ENCODE measurements at regions of chr1 and their contacts with region 1.

Region 1: GRCh38 chr1:20661207-20662109 is at the start of gene DDOST:
- DNase-seq: peak; percentile 98
- H3K4me3 Mint-ChIP-seq: peak within 1 kb of the TSS; percentile 100
- H3K27ac Mint-ChIP-seq: peak within 1 kb of the TSS; percentile 98
- H3K4me1 Mint-ChIP-seq: peaks cover 46% of the 10 kb centered on the region
- H3K27me3 Mint-ChIP-seq: no peaks in the 10 kb centered on the region
- total RNA-seq, gene DDOST: 165 to 180 TPM

Region 2: GRCh38 chr1:20732588-20733360 is 71.3 kb after region 1 on chr1 and contains the start of gene SH2D5:
- CTCF ChIA-PET with region 1: no interaction called
- POLR2A ChIA-PET with region 1: no interaction called
- intact Hi-C with region 1: loop called (anchors 5 kb)
- DNase-seq: peak; percentile 85
- H3K4me3 Mint-ChIP-seq: peak within 1 kb of the TSS; percentile 74
- H3K27ac Mint-ChIP-seq: no peak within 1 kb of the TSS
- H3K4me1 Mint-ChIP-seq: peaks cover 21% of the 10 kb centered on the region
- H3K27me3 Mint-ChIP-seq: peaks cover 19% of the 10 kb centered on the region
- total RNA-seq, gene SH2D5: 0.07 to 0.12 TPM

Region 3: DNA sequence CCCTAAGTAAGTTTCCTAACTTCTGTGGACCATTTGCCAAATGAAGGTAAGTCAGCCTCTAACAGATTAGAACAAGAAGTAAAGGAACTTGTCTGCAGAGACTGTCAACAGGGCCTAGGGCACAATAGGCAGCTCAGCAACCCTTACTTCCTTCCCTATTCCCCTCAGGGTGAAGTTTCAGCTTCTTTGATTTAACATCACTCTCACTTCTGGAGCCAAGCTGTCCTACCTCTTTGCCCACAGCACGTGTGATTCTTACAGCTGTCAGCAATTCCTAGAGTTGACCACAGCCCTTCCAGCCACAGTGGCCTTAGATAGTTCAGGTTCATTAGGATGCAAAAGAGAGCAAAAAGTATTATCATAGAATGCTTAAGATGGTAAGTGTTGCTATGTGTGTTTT is 522.8 kb after region 1 on chr1:
- CTCF ChIA-PET with region 1: no interaction called
- POLR2A ChIA-PET with region 1: no interaction called
- intact Hi-C with region 1: no loop called
- DNase-seq: no peak
- H3K4me3 Mint-ChIP-seq: no peak overlapping the region
- H3K27ac Mint-ChIP-seq: no peak overlapping the region
- H3K4me1 Mint-ChIP-seq: no peaks in the 10 kb centered on the region
- H3K27me3 Mint-ChIP-seq: peaks cover 1% of the 10 kb centered on the region

Measured in activated CD4-positive, alpha-beta memory T cell treated with anti-CD3 and anti-CD28 coated beads for 36 hours (primary cell).